ENCODE measurements at regions of chr13 and their contacts with region 1.

Region 1: DNA sequence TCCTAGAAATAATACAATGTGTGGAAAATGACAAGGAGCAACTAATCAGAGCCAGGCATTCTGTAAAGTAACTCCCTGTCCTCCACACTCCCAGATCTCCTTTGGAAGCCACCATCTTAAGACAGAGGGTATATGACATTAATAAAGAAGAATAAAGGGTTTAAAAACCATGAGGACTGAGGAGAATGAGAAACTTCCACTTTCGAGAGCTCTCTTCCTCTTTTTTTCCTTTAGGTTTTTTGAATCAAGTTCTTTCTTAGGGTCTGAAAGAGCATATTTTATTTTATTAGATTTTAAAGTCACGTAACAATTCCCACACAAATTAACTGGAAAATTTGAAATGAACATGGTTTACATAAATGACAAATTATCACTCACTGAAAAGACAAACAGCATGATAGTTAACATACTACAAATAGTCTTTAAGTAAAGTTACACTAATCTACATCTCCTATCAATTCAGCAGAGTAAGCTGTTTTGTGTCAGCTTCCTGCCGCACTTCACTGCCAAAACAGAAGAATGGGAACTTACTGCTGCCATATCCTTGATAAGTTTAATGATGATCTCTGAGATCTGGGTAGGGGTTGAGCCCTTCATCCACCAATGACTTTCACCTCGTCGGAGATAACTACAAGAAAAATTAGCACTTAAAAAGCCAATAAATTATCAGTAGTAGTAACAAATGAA is 38.6 kb upstream of the FBXL3 start:
- DNase-seq: no peak
- H3K4me3 ChIP-seq: no peak overlapping the region
- H3K27ac ChIP-seq: no peak overlapping the region
- H3K4me1 ChIP-seq: no peaks in the 10 kb centered on the region
- H3K27me3 ChIP-seq: no peaks in the 10 kb centered on the region
- CTCF ChIP-seq: no peak

Region 2: DNA sequence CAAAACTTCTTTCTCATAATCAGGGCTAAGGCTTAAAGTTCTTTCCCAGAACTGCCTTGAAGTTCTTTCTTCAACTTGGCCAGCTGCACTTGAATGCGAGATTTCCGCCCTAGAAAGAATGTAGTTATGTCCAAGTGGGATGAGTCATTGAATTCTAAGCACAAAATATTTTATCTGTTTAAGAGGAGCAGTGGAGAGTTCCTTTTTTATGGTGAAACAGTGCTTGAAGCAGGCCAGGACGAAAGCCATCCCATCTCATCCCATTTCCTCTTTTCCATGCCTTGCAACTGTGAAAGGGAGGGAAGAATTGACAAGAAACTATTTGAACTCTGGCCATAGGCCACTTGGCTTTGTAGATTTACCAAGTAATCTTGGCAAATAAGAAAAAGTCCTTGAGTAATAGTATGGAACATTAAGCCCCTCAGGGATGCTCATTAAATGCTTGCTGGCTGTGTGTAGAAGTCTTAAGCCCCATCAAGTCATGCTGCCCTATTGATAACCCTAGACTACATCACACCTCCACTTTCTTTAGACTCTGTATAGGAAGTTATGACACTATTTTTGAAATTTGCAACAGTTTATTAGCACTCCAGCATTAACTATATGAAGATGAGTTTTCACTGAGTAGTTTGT is 353.9 kb before region 1 on chr13:
- intact Hi-C with region 1: no loop called
- DNase-seq: no peak
- H3K4me3 ChIP-seq: no peak overlapping the region
- H3K27ac ChIP-seq: peak overlapping the region; percentile 1 to 10
- H3K4me1 ChIP-seq: peaks cover 0 to 20% of the 10 kb centered on the region in 2 donors
- H3K27me3 ChIP-seq: no peaks in the 10 kb centered on the region
- CTCF ChIP-seq: no peak

Region 3: GRCh38 chr13:77184455-77184854 is 118.9 kb after region 1 on chr13:
- intact Hi-C with region 1: loop called (anchors 10 kb)
- DNase-seq: no peak
- H3K4me3 ChIP-seq: no peak overlapping the region
- H3K27ac ChIP-seq: no peak overlapping the region
- H3K4me1 ChIP-seq: no peaks in the 10 kb centered on the region
- H3K27me3 ChIP-seq: no peaks in the 10 kb centered on the region
- CTCF ChIP-seq: no peak

Measured in ascending aorta (tissue), 2 donors.